SK-N-SH (cell line): ENCODE measurements at regions of chr19 and their contacts with region 1.

Region 1: DNA sequence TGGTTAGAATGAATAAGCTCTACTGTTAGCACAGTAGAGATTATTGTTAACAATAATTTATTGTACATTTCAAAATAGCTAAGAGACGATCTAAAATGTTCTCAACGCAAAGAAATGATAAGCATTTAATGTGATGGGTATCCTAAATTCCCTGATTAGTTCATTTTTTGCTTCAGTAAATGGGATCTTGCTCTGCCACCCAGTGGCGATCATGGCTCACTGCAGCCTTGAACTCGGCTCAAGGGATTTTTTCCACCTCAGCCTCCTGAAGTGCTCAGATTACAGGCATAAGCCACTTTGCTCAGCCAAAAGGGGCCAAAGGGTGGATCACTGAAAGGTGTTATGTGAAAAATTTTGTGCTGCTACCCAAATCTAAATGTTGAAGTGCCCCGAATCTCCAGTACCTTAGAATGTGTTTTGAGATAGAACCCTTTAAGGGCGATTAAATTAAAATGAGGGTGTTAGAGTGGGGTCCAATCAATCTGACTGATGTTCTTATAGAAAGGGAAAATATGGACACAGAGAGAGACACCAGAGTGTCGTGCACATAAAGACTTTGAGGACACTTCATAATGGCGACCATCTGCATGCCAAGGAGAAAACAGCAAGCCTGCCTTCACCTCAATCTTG is 31.5 kb upstream of the ZNF766 start:
- DNase-seq: peak; percentile 44
- H3K4me3 ChIP-seq: no peak overlapping the region; a peak in 1 of 4 replicates
- H3K27ac ChIP-seq: no peak overlapping the region
- H3K4me1 ChIP-seq: no peaks in the 10 kb centered on the region
- H3K27me3 ChIP-seq: no peaks in the 10 kb centered on the region
- CTCF ChIP-seq: peak; percentile 92
- EP300 ChIP-seq: no peak
- RAD21 ChIP-seq: peak; percentile 92

Region 2: DNA sequence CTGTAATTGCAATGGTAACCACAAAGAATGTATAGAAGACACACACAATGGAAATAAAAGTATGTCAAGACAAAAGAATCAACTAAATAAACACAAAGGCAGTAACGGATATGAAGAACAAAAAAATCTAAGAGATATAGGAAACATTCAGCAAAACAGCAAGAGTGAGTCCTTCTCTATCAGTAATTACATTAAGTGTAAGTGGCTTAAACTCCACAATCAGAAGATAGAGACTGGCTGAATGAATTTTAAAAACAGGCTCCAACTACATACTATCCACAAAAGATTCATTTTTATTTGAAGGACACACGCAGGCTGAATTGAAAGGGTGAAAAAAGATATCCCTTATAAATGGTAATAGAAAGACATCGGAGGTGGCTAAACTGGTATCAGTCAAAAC is 117.6 kb before region 1 on chr19:
- CTCF ChIA-PET with region 1: no interaction called
- POLR2A ChIA-PET with region 1: no interaction called
- DNase-seq: no peak
- H3K4me3 ChIP-seq: no peak overlapping the region
- H3K27ac ChIP-seq: no peak overlapping the region
- H3K4me1 ChIP-seq: no peaks in the 10 kb centered on the region
- H3K27me3 ChIP-seq: no peaks in the 10 kb centered on the region
- CTCF ChIP-seq: no peak
- EP300 ChIP-seq: no peak
- RAD21 ChIP-seq: no peak

Region 3: GRCh38 chr19:52139252-52140031 is 98.4 kb before region 1 on chr19 and contains the start of gene ZNF616:
- CTCF ChIA-PET with region 1: interaction called, 20 read pairs
- POLR2A ChIA-PET with region 1: no interaction called
- DNase-seq: peak; percentile 81
- H3K4me3 ChIP-seq: peak within 1 kb of the TSS; percentile 82 to 99
- H3K27ac ChIP-seq: peak within 1 kb of the TSS; percentile 92 to 97
- H3K4me1 ChIP-seq: peaks cover 0 to 9% of the 10 kb centered on the region in 2 experiments; a peak in 2 of 4 replicates
- H3K27me3 ChIP-seq: no peaks in the 10 kb centered on the region
- CTCF ChIP-seq: peak; percentile 75
- EP300 ChIP-seq: no peak
- RAD21 ChIP-seq: peak; percentile 79
- polyA plus RNA-seq, gene ZNF616: 1.5 and 2.0 TPM in 2 replicates

Region 4: GRCh38 chr19:52270281-52270741 is 32.4 kb after region 1 on chr19:
- CTCF ChIA-PET with region 1: no interaction called
- POLR2A ChIA-PET with region 1: no interaction called
- DNase-seq: peak; percentile 64
- H3K4me3 ChIP-seq: peak overlapping the region; percentile 85 to 91
- H3K27ac ChIP-seq: peak overlapping the region; percentile 90 to 94
- H3K4me1 ChIP-seq: peaks cover 0 to 2% of the 10 kb centered on the region in 2 experiments; a peak in 1 of 4 replicates
- H3K27me3 ChIP-seq: no peaks in the 10 kb centered on the region
- CTCF ChIP-seq: no peak
- EP300 ChIP-seq: no peak
- RAD21 ChIP-seq: no peak

Region 5: DNA sequence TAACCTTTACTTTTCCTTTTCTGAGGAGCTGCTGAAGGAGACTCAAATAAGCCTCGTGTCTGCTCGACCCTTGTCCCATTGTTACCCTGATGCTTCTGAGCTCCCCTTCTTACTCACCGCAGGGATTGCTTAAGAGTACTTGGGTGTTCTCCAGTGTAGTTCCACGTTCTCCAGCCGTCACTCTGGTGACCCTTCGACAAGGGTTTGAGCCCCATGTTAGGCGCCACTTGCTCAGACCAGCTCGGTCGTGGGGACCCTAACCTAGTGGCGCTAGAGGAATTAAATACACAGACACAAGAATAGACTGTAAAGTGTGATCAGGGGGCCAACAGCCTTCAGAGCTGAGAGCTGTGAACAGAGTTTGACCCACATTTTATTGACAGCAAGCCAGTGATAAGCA is 69.4 kb after region 1 on chr19:
- CTCF ChIA-PET with region 1: no interaction called
- POLR2A ChIA-PET with region 1: no interaction called
- DNase-seq: no peak
- H3K4me3 ChIP-seq: no peak overlapping the region; a peak in 1 of 4 replicates
- H3K27ac ChIP-seq: no peak overlapping the region
- H3K4me1 ChIP-seq: no peaks in the 10 kb centered on the region
- H3K27me3 ChIP-seq: no peaks in the 10 kb centered on the region
- CTCF ChIP-seq: no peak
- EP300 ChIP-seq: no peak
- RAD21 ChIP-seq: no peak